ENCODE measurements at regions of chr1 and their contacts with region 1.

Region 1: GRCh38 chr1:15152318-15153183 is 996 bp upstream of the TMEM51 start:
- DNase-seq: peak; percentile 65 to 92 (median 82)

Region 2: DNA sequence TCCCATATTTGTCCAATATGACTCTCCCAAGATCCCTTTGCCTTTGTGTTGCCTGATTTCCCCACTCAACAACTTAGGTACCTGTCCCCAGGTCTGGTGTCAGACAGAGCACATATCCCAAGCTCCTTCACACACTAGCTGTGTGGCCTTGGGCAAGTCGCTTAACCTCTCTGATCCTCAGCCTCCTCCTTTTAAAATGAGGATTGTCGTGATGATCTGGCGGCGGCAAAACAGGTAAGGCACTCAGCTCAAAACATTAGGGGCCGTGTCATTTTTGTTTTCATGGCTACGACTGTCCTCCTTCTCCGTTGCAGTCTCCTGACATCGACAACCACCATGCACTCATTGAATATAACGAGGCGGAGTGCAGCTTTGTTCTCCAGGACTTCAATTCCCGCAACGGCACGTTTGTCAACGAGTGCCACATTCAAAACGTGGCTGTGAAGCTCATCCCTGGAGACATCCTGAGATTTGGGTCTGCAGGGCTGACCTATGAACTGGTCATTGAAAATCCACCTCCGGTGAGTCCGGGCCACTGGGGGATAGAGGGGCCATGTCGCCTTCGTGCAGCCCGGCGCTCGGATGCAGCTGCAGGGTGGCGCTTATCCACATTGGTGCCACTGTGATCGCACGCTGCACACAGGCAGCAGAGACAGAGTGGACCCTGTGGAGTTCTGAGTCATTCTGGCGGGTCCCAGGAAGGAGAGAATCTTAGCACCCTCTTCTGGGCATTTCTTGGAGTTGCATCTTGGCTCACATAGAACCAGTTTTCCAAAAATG is 119.6 kb after region 1 on chr1:
- intact Hi-C with region 1: loop called (anchors 5 kb)
- DNase-seq: peak; percentile 19 to 88 (median 62)

Region 3: DNA sequence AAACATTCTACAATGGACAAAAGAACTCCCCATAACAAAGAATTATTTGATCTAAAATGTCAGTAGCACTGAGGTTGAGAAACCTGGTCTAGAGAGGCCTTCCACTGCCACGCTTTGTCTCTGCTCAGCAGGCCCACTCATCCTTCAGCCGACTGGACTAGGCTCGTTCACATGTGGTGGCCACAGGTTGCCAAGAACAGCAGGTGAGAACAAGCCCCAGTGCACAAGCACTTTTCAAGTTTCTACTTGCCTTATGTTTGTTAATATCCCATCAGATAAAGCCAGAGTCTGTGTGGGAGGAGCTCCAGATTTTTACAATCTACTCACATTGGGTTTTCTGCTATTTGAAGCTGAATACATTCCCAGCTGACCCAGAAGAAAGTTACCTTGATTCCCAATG is 248.1 kb after region 1 on chr1:
- intact Hi-C with region 1: no loop called
- DNase-seq: no peak

Measured in head of caudate nucleus (tissue), 42 donors.